Activated CD4-positive, alpha-beta memory T cell treated with anti-CD3 and anti-CD28 coated beads for 36 hours (primary cell): ENCODE measurements at regions of chr9 and their contacts with region 1.

Region 1: DNA sequence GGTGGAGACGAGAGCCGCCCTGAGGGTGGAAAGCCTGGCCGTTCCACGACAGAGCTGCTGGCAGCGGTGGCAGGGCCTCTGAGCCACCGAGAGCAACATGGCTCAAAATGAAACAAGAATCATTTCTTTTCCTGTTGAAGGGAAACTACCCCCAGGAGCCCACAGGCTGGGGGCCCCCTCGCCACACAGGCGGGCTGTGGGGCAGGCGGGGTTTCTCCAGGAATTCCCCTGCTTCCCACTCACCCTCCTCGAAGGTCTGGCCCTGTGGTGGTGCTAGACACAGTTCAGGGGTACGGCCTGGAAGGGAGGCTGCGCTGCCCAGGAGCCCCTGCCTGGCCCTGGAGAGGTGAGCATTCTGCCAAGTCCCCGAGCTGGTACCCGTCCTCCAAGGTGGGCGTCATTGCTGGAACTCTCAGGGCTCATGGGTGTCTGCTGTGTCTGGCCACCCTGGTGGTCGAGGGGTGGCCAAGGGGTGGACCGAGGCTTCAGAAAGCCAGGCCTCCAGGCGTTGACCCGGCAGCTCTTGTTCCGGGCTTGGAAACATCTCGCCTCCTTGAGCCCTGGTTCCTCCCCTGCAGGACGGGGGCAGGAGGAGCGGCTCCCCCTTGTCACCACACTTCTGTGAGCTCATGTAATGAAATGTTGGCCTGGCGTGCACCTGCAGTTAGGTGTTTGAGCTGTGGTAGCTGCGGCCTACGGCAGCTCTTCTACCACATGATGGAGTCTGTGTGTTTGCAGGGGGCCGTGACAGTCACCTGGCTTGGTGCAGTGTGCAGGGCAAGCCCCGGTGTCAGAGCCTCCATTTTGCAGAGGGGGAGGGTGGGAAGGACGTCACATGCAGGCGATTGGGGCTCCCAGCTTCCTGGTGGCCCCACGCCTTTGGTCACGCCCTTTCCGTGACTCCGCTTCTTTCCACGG is 65.3 kb downstream of the RXRA start:
- DNase-seq: peak; percentile 93
- H3K4me3 Mint-ChIP-seq: peak overlapping the region; percentile 78
- H3K27ac Mint-ChIP-seq: peak overlapping the region; percentile 96
- H3K4me1 Mint-ChIP-seq: peaks cover 60% of the 10 kb centered on the region
- H3K27me3 Mint-ChIP-seq: peaks cover 3% of the 10 kb centered on the region

Region 2: DNA sequence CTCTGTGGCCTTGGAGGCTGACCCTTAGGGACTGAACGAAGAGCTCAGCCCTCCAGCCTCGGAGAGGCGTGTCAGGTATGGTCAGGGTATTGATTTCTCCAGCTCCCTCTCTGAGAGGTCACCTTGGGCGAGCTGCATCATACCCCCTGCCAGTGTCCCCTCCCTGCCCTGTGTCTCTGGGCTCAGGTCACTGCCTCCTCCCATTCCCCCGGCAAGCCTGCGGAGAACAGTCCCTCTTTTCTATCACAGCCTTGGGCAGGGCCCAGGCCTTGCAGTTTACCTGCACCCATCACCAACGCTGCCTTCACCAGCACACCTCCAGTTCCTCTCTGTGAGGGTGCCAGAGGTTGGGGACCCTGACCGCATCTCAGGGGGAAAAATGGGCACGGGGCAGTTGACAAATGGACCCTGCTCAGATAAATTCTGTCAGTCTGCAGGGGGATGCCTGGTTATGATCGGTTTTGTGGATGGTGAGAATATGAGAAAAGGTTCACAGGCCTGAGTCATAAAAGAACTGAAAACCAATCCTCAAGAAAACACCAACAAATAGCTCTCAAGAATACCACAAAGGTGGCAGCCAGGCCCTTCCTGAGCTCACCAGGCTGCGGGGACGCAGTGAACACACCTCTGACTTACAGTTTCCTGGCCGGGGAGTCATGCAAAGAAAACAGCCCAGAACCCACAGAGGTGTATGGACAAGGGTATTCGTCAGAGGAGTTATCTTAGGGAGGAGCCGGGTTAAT is 90.0 kb before region 1 on chr9:
- CTCF ChIA-PET with region 1: interaction called, 5 read pairs
- POLR2A ChIA-PET with region 1: interaction called, 10 read pairs
- intact Hi-C with region 1: loop called (anchors 2 kb)
- DNase-seq: peak; percentile 85
- H3K4me3 Mint-ChIP-seq: no peak overlapping the region
- H3K27ac Mint-ChIP-seq: no peak overlapping the region
- H3K4me1 Mint-ChIP-seq: peaks cover 11% of the 10 kb centered on the region
- H3K27me3 Mint-ChIP-seq: peaks cover 2% of the 10 kb centered on the region

Region 3: DNA sequence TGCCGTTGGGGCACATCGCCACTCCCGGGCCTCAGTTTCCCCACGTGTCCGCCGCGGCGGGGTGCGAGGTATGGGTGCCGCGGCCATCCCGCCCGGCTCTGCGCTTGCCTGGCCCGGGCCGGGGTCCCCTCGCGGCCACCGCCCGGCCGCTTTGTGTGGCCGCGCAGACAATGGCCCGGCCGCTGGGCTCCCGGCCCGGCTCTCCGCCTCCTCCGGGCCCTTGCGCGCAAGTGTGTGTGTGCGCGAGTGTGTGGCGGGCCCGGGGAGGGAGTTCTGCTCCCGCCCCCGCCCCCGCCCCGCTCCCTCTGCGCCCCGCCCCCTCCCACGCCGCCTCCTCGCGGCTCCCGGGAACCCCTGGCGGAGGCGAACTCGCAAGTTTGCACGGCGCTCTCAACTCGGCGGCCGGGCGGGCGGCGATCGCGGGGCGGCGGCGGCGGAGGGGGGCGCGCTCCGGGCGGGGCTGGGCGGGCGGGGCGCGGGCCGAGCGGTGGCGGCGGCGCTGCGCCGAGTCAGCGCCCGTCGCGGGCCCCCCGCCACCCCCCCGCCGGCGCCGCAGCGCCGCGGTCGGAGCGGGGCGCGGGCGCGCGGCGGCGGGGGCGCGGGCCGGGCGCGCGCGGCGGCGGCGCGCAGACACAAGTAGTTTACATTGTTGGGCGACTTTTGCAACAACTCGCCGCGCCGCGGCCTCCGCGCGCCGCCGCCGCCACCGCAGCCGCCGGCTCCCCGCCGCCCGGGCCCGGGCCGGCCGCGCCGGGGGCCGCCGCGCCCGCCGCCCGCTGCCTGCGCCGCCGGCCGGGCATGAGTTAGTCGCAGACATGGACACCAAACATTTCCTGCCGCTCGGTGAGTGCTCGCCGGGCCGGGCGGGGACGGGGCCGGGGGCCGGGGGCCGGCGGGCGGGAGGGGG is 65.5 kb before region 1 on chr9 and contains the start of gene RXRA:
- CTCF ChIA-PET with region 1: no interaction called
- POLR2A ChIA-PET with region 1: interaction called, 3 read pairs
- intact Hi-C with region 1: loop called (anchors 5 kb)
- DNase-seq: peak; percentile 59
- H3K4me3 Mint-ChIP-seq: peak within 1 kb of the TSS; percentile 56
- H3K27ac Mint-ChIP-seq: no peak within 1 kb of the TSS
- H3K4me1 Mint-ChIP-seq: peaks cover 8% of the 10 kb centered on the region
- H3K27me3 Mint-ChIP-seq: peaks cover 5% of the 10 kb centered on the region
- total RNA-seq, gene RXRA: 22.1 to 22.5 TPM

Region 4: GRCh38 chr9:134407123-134407808 is 15.7 kb after region 1 on chr9:
- CTCF ChIA-PET with region 1: interaction called, 4 read pairs
- POLR2A ChIA-PET with region 1: interaction called, 26 read pairs
- intact Hi-C with region 1: loop called (anchors 1 kb)
- DNase-seq: peak; percentile 88
- H3K4me3 Mint-ChIP-seq: peak overlapping the region; percentile 52
- H3K27ac Mint-ChIP-seq: no peak overlapping the region
- H3K4me1 Mint-ChIP-seq: peaks cover 38% of the 10 kb centered on the region
- H3K27me3 Mint-ChIP-seq: no peaks in the 10 kb centered on the region